Activated CD4-positive, alpha-beta T cell treated with anti-CD3 and anti-CD28 coated beads, Interleukin-2, amount 10 ng/mL, durations not matched to agents 24 days and 14 days (primary cell): ENCODE measurements at regions of chr6 and their contacts with region 1.

Region 1: DNA sequence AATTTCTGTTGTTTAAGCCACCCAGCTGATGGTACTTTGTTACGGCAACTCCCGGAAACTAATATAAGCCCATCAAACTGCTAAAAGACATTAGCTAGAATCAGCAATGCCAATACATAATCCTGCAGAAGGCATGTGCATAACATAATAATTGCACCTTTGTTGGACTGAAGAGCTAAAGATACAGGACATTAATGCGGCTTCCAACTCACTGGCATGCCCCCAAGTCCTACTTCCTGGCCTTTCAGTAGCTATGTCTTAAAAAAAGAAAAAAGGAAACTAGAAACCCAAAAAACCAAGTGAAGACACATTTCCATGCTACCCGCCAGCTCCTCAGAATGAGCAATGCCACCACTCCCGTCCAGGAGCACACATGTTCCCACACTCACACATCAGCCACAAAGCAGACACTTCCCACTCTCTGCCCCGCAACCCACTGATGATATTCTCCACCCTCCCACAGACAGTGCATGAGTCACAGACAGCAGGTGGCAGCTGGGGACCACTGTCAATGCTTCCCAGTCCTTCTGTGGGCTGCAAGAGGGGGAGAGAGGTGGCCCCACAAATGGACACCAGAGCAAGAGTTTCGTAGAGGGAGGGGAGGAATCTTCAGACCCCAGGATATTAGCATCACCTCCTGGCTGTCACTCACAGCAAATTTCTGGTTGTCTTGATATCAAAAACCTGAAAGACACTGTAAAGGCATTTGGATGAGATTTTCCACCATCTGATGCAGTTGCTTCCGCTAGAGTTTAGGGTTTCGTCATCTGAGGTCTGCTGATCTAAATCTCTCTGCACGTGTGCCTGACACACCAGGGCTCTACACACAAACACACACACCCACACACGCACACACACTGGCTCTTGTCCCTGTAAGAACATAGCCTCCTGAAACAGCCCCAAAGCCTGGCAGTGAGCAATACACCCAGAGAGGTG is 32.8 kb downstream of the GFOD1 start:
- DNase-seq: peak; percentile 85
- H3K4me3 Mint-ChIP-seq: peak overlapping the region; percentile 42
- H3K27ac Mint-ChIP-seq: peak overlapping the region; percentile 93
- H3K4me1 Mint-ChIP-seq: peaks cover 43% of the 10 kb centered on the region
- H3K27me3 Mint-ChIP-seq: no peaks in the 10 kb centered on the region

Region 2: DNA sequence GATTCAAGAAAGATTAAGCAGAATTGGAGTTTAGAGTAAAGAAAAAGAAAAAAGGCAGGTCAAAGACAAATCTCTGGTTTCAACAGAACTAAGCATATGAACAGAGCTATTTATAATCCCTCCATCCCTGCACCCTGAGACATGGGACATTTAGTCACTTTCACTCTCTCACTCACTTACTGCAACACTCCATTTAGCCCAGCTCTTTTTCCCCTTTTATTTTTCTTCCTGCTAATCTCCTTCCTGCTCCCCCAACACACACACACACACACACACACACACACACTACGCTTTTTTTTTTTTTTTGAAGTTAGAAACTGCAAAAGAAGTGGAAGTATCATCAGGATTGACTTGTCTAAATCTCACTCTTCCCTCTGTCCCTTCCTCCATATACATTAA is 81.1 kb before region 1 on chr6:
- intact Hi-C with region 1: no loop called
- DNase-seq: no peak
- H3K4me3 Mint-ChIP-seq: no peak overlapping the region
- H3K27ac Mint-ChIP-seq: no peak overlapping the region
- H3K4me1 Mint-ChIP-seq: peaks cover 17% of the 10 kb centered on the region
- H3K27me3 Mint-ChIP-seq: no peaks in the 10 kb centered on the region

Region 3: DNA sequence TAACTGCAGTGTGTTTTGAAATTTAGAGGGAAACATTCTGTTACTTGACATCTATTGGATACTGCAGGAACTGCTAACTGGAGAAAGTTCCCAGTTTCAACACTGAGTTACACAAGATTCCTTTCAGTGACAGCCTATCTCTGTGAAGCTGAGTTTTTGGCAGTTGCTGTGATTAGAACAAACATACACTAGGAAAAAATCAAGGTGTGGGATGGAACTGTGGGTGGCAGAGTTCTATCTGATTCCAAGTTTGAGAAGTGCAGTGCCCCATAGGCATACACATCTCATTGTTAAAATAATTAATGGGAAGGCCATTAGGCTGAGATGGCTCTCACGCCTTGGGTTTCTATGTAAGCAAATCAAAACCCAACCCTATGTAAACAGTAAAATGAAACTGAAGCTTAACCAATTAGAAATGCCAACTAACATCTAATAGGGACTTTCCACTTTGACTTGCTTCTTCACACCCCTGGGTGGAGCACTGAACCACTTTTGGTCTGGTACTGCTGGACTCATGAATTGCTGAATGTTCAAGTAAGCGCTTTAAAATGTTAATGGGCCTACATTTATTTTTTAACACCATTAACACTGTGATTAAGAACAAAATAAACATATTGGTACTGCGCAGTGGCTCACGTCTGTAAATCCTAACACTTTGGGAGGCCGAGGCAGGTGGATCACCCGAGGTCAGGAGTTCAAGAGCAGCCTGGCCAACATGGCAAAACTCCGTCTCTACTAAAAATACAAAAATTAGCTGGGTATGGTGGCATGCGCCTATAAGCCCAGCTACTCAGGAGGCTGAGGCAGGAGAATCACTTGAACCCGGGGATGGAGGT is 71.0 kb before region 1 on chr6:
- intact Hi-C with region 1: loop called (anchors 2 kb)
- DNase-seq: peak; percentile 73
- H3K4me3 Mint-ChIP-seq: peak overlapping the region; percentile 19
- H3K27ac Mint-ChIP-seq: no peak overlapping the region
- H3K4me1 Mint-ChIP-seq: peaks cover 18% of the 10 kb centered on the region
- H3K27me3 Mint-ChIP-seq: no peaks in the 10 kb centered on the region

Region 4: DNA sequence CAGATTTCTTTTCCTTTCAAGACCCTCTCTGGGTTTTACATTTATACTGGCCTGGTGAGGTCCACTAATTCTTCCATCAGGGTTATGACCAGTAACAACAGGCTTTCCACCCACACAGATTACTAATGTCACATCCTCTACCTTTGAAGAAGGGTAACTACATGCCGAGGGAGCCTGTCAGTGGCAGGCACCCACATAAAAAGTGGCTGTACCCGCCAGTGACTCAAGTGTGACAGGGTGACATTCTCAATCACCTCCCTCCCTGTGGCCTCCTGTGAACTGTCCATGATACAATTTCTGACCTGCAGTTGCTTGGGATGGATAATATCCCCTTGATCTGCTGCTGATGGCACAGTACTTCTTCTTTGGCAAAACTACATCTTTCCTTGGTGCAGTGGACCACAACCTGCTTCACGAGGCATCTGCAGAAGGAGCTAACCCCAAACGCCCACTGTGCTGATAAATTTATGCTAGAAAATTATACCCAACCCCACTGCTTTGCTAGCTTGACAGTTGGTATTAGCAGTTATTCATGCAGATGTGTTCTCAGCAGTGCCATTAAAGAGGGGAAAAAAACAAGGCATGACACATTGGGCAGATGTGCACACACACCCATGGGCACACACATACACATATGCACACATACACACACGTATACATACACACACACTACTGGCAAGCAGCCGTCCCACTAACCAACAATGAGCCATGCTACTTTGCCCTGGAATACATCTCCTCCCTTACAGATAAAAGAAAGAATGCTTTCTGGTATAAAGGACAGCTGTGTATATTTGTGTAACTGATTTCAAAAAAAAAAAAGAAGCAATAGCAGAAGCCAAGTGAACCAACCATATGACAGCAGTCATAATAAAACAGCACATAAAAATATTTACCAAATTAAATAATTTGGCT is 12.0 kb after region 1 on chr6:
- intact Hi-C with region 1: loop called (anchors 1 kb)
- DNase-seq: no peak
- H3K4me3 Mint-ChIP-seq: peak overlapping the region; percentile 60
- H3K27ac Mint-ChIP-seq: peak overlapping the region; percentile 88
- H3K4me1 Mint-ChIP-seq: peaks cover 52% of the 10 kb centered on the region
- H3K27me3 Mint-ChIP-seq: no peaks in the 10 kb centered on the region